ENCODE measurements at regions of chr6 and their contacts with region 1.

Region 1: GRCh38 chr6:82283771-82284410 is 36.3 kb upstream of the IBTK start:
- DNase-seq: no peak
- ATAC-seq: no peak
- H3K4me3 ChIP-seq: no peak overlapping the region
- H3K4me3 Mint-ChIP-seq: no peak overlapping the region
- H3K27ac ChIP-seq: no peak overlapping the region
- H3K27ac Mint-ChIP-seq: no peak overlapping the region
- H3K4me1 ChIP-seq: peaks cover 6% of the 10 kb centered on the region
- H3K4me1 Mint-ChIP-seq: peaks cover 30% of the 10 kb centered on the region
- H3K27me3 ChIP-seq: peaks cover 0 to 3% of the 10 kb centered on the region in 2 experiments
- H3K27me3 Mint-ChIP-seq: no peaks in the 10 kb centered on the region
- CTCF ChIP-seq: no peak

Region 2: GRCh38 chr6:80411486-80411885 is 1872.4 kb before region 1 on chr6:
- CTCF ChIA-PET with region 1: no interaction called
- POLR2A ChIA-PET with region 1: no interaction called
- intact Hi-C with region 1: loop called in 1 of 2 experiments (anchors 5 kb)
- DNase-seq: no peak
- ATAC-seq: no peak
- H3K4me3 ChIP-seq: no peak overlapping the region
- H3K4me3 Mint-ChIP-seq: no peak overlapping the region
- H3K27ac ChIP-seq: no peak overlapping the region
- H3K27ac Mint-ChIP-seq: no peak overlapping the region
- H3K4me1 ChIP-seq: no peaks in the 10 kb centered on the region
- H3K4me1 Mint-ChIP-seq: no peaks in the 10 kb centered on the region
- H3K27me3 ChIP-seq: no peaks in the 10 kb centered on the region
- H3K27me3 Mint-ChIP-seq: no peaks in the 10 kb centered on the region
- CTCF ChIP-seq: no peak

Region 3: GRCh38 chr6:82227770-82228169 is 56.1 kb before region 1 on chr6:
- CTCF ChIA-PET with region 1: no interaction called
- POLR2A ChIA-PET with region 1: no interaction called
- intact Hi-C with region 1: no loop called
- DNase-seq: no peak
- ATAC-seq: no peak
- H3K4me3 ChIP-seq: no peak overlapping the region
- H3K4me3 Mint-ChIP-seq: no peak overlapping the region
- H3K27ac ChIP-seq: no peak overlapping the region
- H3K27ac Mint-ChIP-seq: peak overlapping the region; percentile 3
- H3K4me1 ChIP-seq: no peaks in the 10 kb centered on the region
- H3K4me1 Mint-ChIP-seq: peaks cover 21% of the 10 kb centered on the region
- H3K27me3 ChIP-seq: no peaks in the 10 kb centered on the region
- H3K27me3 Mint-ChIP-seq: no peaks in the 10 kb centered on the region
- CTCF ChIP-seq: no peak

Measured in CD4-positive, alpha-beta T cell (primary cell).